A549 (cell line): ENCODE measurements at regions of chr19 and their contacts with region 1.

Region 1: GRCh38 chr19:49391581-49392399 is 3.7 kb downstream of the KASH5 start:
- DNase-seq: peak; percentile 89 to 93
- ATAC-seq: peak; percentile 83 to 94
- H3K4me3 ChIP-seq: no peak overlapping the region
- H3K27ac ChIP-seq: no peak overlapping the region
- H3K4me1 ChIP-seq: 0 out of 3 replicates have a peak, but pooled peaks cover 3% of the 10 kb centered on the region
- CTCF ChIP-seq: peak; percentile 98
- EP300 ChIP-seq: no peak
- POLR2A ChIP-seq: no peak
- RAD21 ChIP-seq: peak; percentile 97 to 99

Region 2: DNA sequence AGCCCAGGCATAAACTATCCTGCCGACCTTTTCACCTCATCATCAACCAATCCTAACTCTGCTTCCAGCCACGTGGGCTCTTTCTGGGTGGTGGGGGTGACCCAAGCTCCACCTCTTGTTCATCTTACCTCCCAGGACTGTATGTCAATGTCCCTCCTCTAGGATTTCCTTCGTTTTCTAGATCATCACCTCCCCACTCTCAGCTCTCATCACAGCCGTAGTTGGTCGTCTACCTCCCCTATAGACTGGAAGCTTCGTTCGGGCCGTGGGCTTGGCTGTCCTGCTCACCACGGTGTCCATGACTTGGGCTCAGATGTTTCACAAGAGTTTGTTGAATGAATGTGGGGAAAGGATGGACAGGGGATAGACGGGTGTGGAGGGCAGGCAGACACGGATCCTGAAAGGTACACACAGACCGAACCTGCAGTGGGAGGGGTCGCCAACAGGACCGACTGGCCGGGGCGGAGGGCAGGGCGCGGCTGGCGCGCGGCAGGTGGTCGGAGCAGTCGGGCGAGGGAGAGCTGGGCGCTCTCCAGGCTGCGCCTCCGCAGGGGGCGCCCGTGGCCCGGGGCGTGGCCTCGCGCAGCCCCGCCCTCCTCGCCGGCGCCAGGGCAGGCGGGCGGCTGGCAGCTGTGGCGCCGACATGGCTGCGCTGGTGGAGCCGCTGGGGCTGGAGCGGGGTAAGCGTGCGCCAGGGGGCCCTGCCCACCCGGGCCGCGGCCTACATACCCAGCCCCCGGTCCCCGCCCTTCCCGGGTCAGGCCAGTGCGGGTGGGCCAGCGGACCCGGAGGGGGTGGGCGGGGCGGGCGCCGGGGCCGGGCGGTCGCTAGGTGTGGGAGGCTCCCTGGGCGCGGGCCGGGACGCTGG is 277.8 kb before region 1 on chr19 and contains the start of gene LIN7B:
- CTCF ChIA-PET with region 1: no interaction called
- POLR2A ChIA-PET with region 1: no interaction called
- DNase-seq: peak; percentile 85 to 94
- ATAC-seq: peak; percentile 67
- H3K4me3 ChIP-seq: peak within 1 kb of the TSS; percentile 79
- H3K27ac ChIP-seq: peak within 1 kb of the TSS; percentile 92 to 95
- H3K4me1 ChIP-seq: peaks cover 27% of the 10 kb centered on the region
- CTCF ChIP-seq: peak; percentile 81
- EP300 ChIP-seq: no peak
- POLR2A ChIP-seq: peak; percentile 78
- RAD21 ChIP-seq: no peak
- polyA plus RNA-seq, gene LIN7B: 4.6 and 5.4 TPM in 2 replicates

Region 3: DNA sequence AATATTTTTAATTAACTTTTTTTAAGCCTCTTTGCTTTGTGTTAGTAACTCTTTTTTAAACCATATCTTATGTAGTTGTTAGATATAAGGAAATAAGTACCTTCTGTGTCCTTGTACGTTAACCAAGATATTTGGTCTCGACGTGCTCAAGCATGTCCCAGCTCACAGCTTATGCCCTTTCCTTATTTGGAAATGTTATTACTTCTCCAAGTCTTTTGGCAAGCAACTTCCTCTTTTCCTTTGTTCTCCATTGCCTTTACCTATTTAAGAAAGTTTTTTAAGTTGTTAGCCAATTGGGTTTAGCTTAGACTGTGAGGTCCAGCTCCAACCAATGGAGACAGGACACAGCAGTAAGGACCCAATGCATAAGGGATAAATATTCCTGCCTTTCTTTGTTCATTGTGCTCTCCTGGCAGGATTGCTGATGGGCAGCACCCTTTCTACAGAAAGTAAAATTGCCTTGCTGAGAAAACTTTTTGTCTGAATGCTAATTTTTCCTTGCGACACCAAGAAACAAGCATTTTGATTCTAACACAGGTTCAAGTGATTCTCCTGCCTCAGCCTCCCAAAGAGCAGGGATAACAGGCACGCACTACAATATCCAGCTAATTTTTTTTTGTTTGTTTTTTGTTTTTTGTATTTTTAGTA is 23.0 kb before region 1 on chr19:
- CTCF ChIA-PET with region 1: interaction called, 108 read pairs
- POLR2A ChIA-PET with region 1: interaction called, 5 read pairs
- DNase-seq: no peak
- ATAC-seq: no peak
- H3K4me3 ChIP-seq: no peak overlapping the region
- H3K27ac ChIP-seq: no peak overlapping the region
- H3K4me1 ChIP-seq: peaks cover 7% of the 10 kb centered on the region; the same call in 2 of the 3 replicates
- CTCF ChIP-seq: no peak
- EP300 ChIP-seq: no peak
- POLR2A ChIP-seq: no peak
- RAD21 ChIP-seq: no peak

Region 4: DNA sequence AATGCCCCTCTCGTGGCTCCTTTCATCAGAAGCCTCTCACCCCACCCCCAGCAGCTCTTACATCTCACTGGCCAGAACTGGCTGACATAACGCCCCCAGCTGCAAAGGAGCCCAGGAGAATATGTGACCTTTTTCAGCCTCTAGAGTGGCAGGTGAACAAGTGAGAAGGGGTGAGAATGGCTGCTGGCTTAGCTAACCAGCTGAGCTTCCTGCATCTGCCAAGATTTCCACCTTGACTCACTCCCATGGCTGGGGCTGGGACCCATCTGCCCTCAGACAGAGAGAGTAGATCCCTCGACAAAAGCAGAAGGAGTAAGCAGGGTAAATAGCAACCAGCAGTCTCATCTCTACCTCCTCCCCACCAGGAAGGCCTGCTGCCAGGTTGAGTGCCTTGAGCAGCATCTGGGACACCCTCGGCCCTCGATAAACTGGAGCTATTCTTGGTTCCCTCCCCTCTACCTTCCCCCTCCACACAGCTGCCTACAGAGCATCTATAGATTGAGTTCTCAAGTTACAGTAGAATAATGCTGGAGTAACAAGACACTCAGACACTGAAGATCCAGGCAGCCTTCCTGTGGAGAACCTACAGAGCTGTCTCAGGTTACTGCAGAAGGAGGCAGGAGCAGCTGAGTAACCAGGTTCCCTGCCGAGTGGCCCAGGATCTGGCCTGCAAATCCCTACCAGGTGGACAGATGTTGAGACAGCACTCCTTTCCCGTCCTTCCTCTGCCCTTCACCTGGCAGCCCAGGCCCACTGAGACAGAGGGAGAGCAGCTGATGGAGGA is 11.8 kb after region 1 on chr19:
- CTCF ChIA-PET with region 1: interaction called, 68 read pairs
- POLR2A ChIA-PET with region 1: no interaction called
- DNase-seq: no peak
- ATAC-seq: peak in 1 of 2 experiments; percentile 18; a peak in 3 of 6 replicates
- H3K4me3 ChIP-seq: no peak overlapping the region
- H3K27ac ChIP-seq: no peak overlapping the region
- H3K4me1 ChIP-seq: no peaks in the 10 kb centered on the region
- CTCF ChIP-seq: no peak
- EP300 ChIP-seq: no peak
- POLR2A ChIP-seq: no peak
- RAD21 ChIP-seq: no peak

Region 5: GRCh38 chr19:49421039-49421877 is 29.5 kb after region 1 on chr19:
- CTCF ChIA-PET with region 1: interaction called, 141 read pairs
- POLR2A ChIA-PET with region 1: interaction called, 5 read pairs
- DNase-seq: no peak
- ATAC-seq: peak in 1 of 2 experiments; percentile 4; a peak in 2 of 6 replicates
- H3K4me3 ChIP-seq: peak overlapping the region; percentile 21; the same call in 1 of the 3 replicates
- H3K27ac ChIP-seq: no peak overlapping the region
- H3K4me1 ChIP-seq: peaks cover 21% of the 10 kb centered on the region
- CTCF ChIP-seq: no peak
- EP300 ChIP-seq: no peak
- POLR2A ChIP-seq: no peak
- RAD21 ChIP-seq: no peak

Region 6: GRCh38 chr19:49436369-49437017 is 44.7 kb after region 1 on chr19:
- CTCF ChIA-PET with region 1: interaction called, 244 read pairs
- POLR2A ChIA-PET with region 1: no interaction called
- DNase-seq: peak in 1 of 2 experiments; percentile 64
- ATAC-seq: peak; percentile 14 to 15; a peak in 3 of 6 replicates
- H3K4me3 ChIP-seq: no peak overlapping the region
- H3K27ac ChIP-seq: no peak overlapping the region
- H3K4me1 ChIP-seq: peaks cover 8% of the 10 kb centered on the region
- CTCF ChIP-seq: no peak
- EP300 ChIP-seq: no peak
- POLR2A ChIP-seq: no peak
- RAD21 ChIP-seq: no peak

Region 7: DNA sequence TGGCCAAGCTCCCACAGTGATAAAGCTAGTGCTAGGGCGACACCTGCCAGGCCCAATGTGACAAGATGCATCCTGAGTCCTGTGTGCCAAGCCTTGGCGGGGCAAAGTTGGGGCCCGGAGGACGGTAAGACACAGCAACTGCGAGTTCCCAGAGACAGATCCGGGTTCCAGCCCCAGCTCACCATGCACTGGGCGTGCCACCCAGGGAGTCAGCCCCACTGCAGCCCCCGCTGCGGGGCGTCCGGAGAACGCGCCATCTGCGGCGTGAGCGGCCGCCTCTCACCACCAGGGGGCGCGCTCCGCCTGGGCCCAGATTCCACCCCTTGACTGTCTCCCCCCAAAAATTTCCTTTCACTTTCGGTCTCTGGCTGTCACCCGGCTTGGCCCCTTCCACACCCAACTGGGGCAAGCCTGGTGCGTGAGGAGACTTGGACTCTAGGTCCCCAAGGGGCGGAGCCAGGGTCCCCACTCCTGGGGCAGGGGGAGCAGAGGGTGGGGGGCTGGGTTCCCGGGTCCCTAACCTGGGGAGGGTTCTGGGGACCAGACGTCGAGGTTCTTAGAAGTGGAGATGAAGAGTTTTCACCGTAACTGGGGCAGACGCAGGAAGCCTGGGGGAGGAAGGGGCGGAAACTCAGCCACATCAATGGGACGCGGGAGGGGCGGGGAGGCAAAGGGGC is 82.2 kb after region 1 on chr19 and contains the start of gene FLT3LG:
- CTCF ChIA-PET with region 1: interaction called, 29 read pairs
- POLR2A ChIA-PET with region 1: no interaction called
- DNase-seq: peak; percentile 61 to 90
- ATAC-seq: peak; percentile 59 to 71
- H3K4me3 ChIP-seq: peak within 1 kb of the TSS; percentile 59
- H3K27ac ChIP-seq: peak within 1 kb of the TSS; percentile 77 to 91
- H3K4me1 ChIP-seq: peaks cover 21% of the 10 kb centered on the region
- CTCF ChIP-seq: peak; percentile 99
- EP300 ChIP-seq: no peak
- POLR2A ChIP-seq: no peak
- RAD21 ChIP-seq: peak; percentile 36 to 59
- polyA plus RNA-seq, gene FLT3LG: 0.42 and 0.58 TPM in 2 replicates